Ovary (tissue), 10 donors: ENCODE measurements at regions of chr6 and their contacts with region 1.

Region 1: GRCh38 chr6:96184798-96185197 is 169.0 kb downstream of the FUT9 start:
- DNase-seq: no peak
- H3K4me3 ChIP-seq: no peak overlapping the region
- H3K27ac ChIP-seq: no peak overlapping the region
- H3K4me1 ChIP-seq: no peaks in the 10 kb centered on the region
- H3K27me3 ChIP-seq: no peaks in the 10 kb centered on the region
- CTCF ChIP-seq: no peak
- EP300 ChIP-seq: no peak
- POLR2A ChIP-seq: no peak

Region 2: DNA sequence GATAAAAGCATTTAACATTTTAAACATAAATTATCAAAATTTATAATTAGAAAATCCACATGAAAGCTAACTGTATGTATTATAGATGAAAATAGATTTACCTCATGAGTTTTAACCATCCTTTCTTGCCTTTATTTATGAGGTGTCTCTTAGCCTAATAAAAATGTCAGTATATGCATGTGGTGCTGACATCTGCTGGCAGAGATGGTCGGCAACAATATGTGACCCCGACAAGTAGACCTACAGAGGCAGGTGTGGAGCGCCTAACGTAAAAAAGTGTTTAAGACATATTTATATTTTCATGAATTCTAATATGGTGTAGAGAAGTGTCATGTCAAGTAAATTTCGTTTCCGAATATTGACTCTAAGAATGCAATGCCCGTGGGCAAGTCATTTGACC is 318.1 kb before region 1 on chr6:
- intact Hi-C with region 1: no loop called
- DNase-seq: no peak
- H3K4me3 ChIP-seq: no peak overlapping the region
- H3K27ac ChIP-seq: no peak overlapping the region
- H3K4me1 ChIP-seq: no peaks in the 10 kb centered on the region
- H3K27me3 ChIP-seq: no peaks in the 10 kb centered on the region
- CTCF ChIP-seq: no peak
- EP300 ChIP-seq: no peak
- POLR2A ChIP-seq: no peak

Region 3: DNA sequence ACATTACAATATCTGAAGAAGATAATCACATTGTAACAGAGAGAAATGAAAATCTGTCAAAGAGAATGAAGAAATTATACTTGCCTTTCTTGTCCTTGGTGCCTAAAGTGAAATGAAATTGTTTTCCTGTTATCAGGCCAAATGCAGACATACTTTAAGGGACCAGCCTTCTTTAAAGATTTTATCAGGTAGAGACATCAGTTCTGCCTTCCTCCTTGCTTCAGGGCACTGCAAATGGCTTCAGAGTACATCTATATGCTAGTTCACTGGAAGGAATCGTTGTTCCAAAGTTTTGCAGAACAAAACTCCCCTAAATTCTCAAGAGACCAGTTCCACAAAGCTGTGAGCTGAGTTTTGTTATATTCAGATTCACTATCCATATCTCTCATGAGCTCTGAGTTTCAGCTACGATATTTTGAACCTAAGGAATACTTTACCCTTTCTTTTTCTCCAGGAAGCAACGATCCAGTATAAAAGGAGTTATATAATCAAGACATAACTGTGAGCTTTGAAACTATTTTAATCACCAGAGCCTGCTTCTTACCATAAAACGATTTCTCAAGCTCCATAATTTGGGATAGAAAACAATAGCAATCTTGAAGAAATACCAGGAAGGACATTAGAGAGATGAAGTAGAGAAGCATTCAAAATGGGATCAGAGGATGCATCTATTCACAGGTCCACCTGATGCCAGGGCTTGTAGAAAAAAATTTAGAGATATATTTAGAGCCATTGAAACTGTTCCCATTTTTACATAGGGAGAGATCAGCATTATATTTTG is 33.3 kb before region 1 on chr6:
- intact Hi-C with region 1: loop called in 1 of 4 experiments (anchors 1 kb)
- DNase-seq: no peak
- H3K4me3 ChIP-seq: no peak overlapping the region
- H3K27ac ChIP-seq: no peak overlapping the region
- H3K4me1 ChIP-seq: no peaks in the 10 kb centered on the region
- H3K27me3 ChIP-seq: no peaks in the 10 kb centered on the region
- CTCF ChIP-seq: no peak
- EP300 ChIP-seq: no peak
- POLR2A ChIP-seq: no peak